ENCODE measurements at regions of chr9 and their contacts with region 1.

Region 1: GRCh38 chr9:127734747-127735529 is at the start of gene TOR2A:
- DNase-seq: peak; percentile 96
- ATAC-seq: peak; percentile 92
- H3K4me3 Mint-ChIP-seq: peak within 1 kb of the TSS; percentile 83
- H3K27ac Mint-ChIP-seq: peak within 1 kb of the TSS; percentile 91
- H3K4me1 Mint-ChIP-seq: peaks cover 13% of the 10 kb centered on the region
- H3K27me3 Mint-ChIP-seq: no peaks in the 10 kb centered on the region
- CTCF ChIP-seq: peak; percentile 15
- total RNA-seq, gene TOR2A: 13.8 and 15.1 TPM in 2 replicates

Region 2: GRCh38 chr9:127224178-127224882 is 510.6 kb before region 1 on chr9:
- CTCF ChIA-PET with region 1: no interaction called
- POLR2A ChIA-PET with region 1: no interaction called
- intact Hi-C with region 1: loop called (anchors 2 kb)
- DNase-seq: peak; percentile 94
- ATAC-seq: peak; percentile 79
- H3K4me3 Mint-ChIP-seq: peak overlapping the region; percentile 85
- H3K27ac Mint-ChIP-seq: peak overlapping the region; percentile 73
- H3K4me1 Mint-ChIP-seq: peaks cover 41% of the 10 kb centered on the region
- H3K27me3 Mint-ChIP-seq: peaks cover 3% of the 10 kb centered on the region
- CTCF ChIP-seq: no peak

Region 3: DNA sequence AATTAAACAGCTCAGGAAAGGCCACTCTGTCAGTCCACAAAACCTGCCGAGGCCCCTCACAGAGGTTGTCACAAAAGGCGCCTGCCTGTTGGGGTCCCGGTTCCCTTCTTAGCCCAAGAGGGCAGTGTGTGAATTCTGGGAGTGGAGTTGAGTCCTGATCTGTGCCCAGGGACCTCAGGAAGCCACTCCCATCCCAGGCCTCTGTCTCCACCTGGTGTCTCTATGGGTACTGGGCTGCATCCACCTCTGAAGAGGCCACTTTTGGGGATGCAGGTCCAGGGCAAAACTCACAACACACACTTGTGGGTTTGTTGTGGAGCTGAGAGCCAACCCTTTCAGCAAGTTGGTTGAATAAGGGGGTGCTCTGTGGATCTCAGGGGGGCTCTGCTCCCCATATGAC is 197.1 kb before region 1 on chr9:
- CTCF ChIA-PET with region 1: no interaction called
- POLR2A ChIA-PET with region 1: no interaction called
- intact Hi-C with region 1: no loop called
- DNase-seq: no peak
- ATAC-seq: no peak
- H3K4me3 Mint-ChIP-seq: no peak overlapping the region
- H3K27ac Mint-ChIP-seq: no peak overlapping the region
- H3K4me1 Mint-ChIP-seq: no peaks in the 10 kb centered on the region
- H3K27me3 Mint-ChIP-seq: no peaks in the 10 kb centered on the region
- CTCF ChIP-seq: no peak

Region 4: GRCh38 chr9:127586537-127586936 is 148.4 kb before region 1 on chr9:
- CTCF ChIA-PET with region 1: interaction called, 24 read pairs
- POLR2A ChIA-PET with region 1: interaction called, 9 read pairs
- intact Hi-C with region 1: loop called (anchors 1 kb)
- DNase-seq: no peak
- ATAC-seq: peak; percentile 64
- H3K4me3 Mint-ChIP-seq: no peak overlapping the region
- H3K27ac Mint-ChIP-seq: no peak overlapping the region
- H3K4me1 Mint-ChIP-seq: no peaks in the 10 kb centered on the region
- H3K27me3 Mint-ChIP-seq: peaks cover 24% of the 10 kb centered on the region
- CTCF ChIP-seq: no peak

Region 5: GRCh38 chr9:127676636-127677035 is 58.3 kb before region 1 on chr9:
- CTCF ChIA-PET with region 1: no interaction called
- POLR2A ChIA-PET with region 1: no interaction called
- intact Hi-C with region 1: no loop called
- DNase-seq: no peak
- ATAC-seq: no peak
- H3K4me3 Mint-ChIP-seq: no peak overlapping the region
- H3K27ac Mint-ChIP-seq: no peak overlapping the region
- H3K4me1 Mint-ChIP-seq: no peaks in the 10 kb centered on the region
- H3K27me3 Mint-ChIP-seq: peaks cover 14% of the 10 kb centered on the region
- CTCF ChIP-seq: no peak

Region 6: GRCh38 chr9:127715394-127716337 is 19.3 kb before region 1 on chr9 and contains the starts of genes PTRH1 and TTC16:
- CTCF ChIA-PET with region 1: interaction called, 9 read pairs
- POLR2A ChIA-PET with region 1: interaction called, 13 read pairs
- intact Hi-C with region 1: loop called (anchors 1 kb)
- DNase-seq: peak; percentile 97
- ATAC-seq: peak; percentile 96
- H3K4me3 Mint-ChIP-seq: peak within 1 kb of the TSS; percentile 100
- H3K27ac Mint-ChIP-seq: peak within 1 kb of the TSS; percentile 92
- H3K4me1 Mint-ChIP-seq: peaks cover 21% of the 10 kb centered on the region
- H3K27me3 Mint-ChIP-seq: no peaks in the 10 kb centered on the region
- CTCF ChIP-seq: no peak
- total RNA-seq, gene PTRH1: 12.7 and 13.8 TPM in 2 replicates
- total RNA-seq, gene TTC16: not detected in 2 replicates

Region 7: GRCh38 chr9:127754099-127755050 is 19.4 kb after region 1 on chr9:
- CTCF ChIA-PET with region 1: no interaction called
- POLR2A ChIA-PET with region 1: no interaction called
- intact Hi-C with region 1: no loop called
- DNase-seq: no peak
- ATAC-seq: no peak
- H3K4me3 Mint-ChIP-seq: no peak overlapping the region
- H3K27ac Mint-ChIP-seq: no peak overlapping the region
- H3K4me1 Mint-ChIP-seq: no peaks in the 10 kb centered on the region
- H3K27me3 Mint-ChIP-seq: no peaks in the 10 kb centered on the region
- CTCF ChIP-seq: no peak

Region 8: GRCh38 chr9:127779136-127779981 is 44.4 kb after region 1 on chr9:
- CTCF ChIA-PET with region 1: interaction called, 39 read pairs
- POLR2A ChIA-PET with region 1: interaction called, 24 read pairs
- intact Hi-C with region 1: no loop called
- DNase-seq: peak; percentile 63
- ATAC-seq: peak; percentile 61
- H3K4me3 Mint-ChIP-seq: peak overlapping the region; percentile 94
- H3K27ac Mint-ChIP-seq: peak overlapping the region; percentile 98
- H3K4me1 Mint-ChIP-seq: peaks cover 70% of the 10 kb centered on the region
- H3K27me3 Mint-ChIP-seq: no peaks in the 10 kb centered on the region
- CTCF ChIP-seq: no peak

Region 9: DNA sequence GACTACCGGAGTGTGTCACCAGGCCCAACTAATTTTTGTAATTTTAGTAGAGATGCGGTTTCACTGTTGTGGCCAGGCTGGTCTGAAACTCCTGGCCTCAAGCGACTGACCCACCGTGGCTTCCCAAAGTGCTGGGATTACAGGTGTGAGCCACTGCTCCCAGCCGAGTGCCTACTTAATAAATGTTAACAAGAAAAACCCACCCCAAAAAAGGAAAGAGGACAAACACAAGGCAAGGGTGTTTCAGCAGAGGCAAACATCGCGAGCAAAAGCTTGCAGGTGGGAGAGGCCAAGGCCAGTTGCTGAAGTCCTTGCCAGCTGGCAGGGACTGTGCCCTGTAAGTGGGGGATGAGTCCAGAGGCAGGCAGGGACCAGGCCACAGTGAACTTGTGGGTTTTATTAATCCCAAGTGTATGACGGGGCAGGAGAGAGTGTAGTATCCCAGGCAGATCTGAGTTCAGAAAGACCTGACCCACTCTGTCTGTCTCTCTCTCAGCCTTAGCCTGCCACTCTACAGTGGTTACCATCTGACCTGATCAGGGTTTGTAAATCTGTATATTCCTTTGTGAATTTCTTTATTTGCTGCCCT is 61.4 kb after region 1 on chr9:
- CTCF ChIA-PET with region 1: interaction called, 11 read pairs
- POLR2A ChIA-PET with region 1: no interaction called
- intact Hi-C with region 1: no loop called
- DNase-seq: no peak
- ATAC-seq: peak; percentile 45
- H3K4me3 Mint-ChIP-seq: peak overlapping the region; percentile 64
- H3K27ac Mint-ChIP-seq: peak overlapping the region; percentile 75
- H3K4me1 Mint-ChIP-seq: peaks cover 32% of the 10 kb centered on the region
- H3K27me3 Mint-ChIP-seq: no peaks in the 10 kb centered on the region
- CTCF ChIP-seq: no peak

Region 10: DNA sequence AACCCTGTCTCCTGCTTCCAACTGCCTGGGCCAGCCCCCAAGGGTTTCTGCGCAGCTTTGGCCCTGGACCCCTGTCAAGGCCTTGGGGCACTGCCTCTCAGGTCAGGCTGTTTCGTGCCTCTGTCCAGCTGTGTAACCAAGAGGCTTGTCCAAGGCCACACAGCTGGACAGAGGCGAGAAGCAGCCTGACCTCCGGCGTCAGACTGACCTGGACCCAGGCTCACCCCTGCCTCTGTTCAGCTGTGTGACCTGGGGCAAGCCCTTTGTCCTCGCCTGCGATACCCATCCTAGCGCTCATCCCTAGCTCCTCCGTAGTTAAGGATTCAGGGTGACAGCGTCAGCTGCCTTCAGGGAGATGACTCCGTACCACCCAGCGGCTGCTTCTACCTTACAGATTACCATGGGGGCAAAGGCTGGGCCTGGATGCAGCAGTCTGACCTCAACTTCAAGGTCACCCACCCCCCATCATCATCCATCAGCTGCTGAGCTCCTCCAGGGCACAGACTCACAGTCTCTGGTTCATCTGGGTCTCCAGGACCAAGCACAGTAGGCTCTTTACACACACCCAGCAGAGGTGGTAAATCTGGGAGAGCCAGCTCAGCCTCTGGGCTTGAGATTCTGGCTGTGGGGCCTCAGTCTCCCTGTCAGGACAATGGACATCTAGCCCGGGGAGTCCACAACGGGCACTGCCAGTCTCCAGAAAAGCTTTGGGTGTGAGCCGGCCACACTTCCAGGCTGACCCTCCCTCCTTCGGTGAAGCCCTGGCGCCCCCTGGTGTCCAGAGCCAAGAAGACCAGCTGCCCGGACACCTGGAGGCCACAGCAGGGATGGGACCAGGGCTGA is 134.6 kb after region 1 on chr9:
- CTCF ChIA-PET with region 1: interaction called, 45 read pairs
- POLR2A ChIA-PET with region 1: interaction called, 14 read pairs
- intact Hi-C with region 1: loop called (anchors 1 kb)
- DNase-seq: peak; percentile 81
- ATAC-seq: peak; percentile 79
- H3K4me3 Mint-ChIP-seq: no peak overlapping the region
- H3K27ac Mint-ChIP-seq: no peak overlapping the region
- H3K4me1 Mint-ChIP-seq: peaks cover 22% of the 10 kb centered on the region
- H3K27me3 Mint-ChIP-seq: no peaks in the 10 kb centered on the region
- CTCF ChIP-seq: no peak